Vagina (tissue), 2 donors: ENCODE measurements at regions of chr10 and their contacts with region 1.

Region 1: DNA sequence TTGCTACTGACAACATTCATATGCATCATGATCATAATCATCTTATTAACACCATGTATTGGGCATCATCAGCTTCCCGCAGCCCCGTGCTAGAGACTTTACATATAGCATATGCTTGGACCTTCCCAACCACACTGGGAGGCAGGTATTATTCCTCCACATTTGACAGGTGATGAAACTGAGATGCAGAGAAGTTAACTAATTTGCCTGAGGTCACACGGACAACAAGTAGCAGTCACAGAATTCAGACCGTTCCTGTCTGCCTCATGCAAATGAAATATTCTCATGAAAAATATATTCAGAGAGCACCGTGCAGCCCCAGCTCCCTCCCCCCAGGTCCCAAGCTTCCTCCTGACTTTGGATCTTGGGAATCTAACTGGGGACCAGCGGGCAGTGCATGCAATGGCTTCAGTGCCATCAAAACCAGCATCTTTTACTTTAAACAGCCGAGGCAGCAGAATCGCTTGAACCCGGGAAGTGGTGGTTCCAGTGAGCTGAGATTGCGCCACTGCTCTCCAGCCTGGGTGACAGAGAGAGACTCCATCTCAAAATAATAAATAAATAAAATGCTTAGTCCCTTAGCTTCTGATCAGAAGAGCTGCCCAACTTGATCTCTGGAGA is 112.2 kb upstream of the GPR26 start:
- DNase-seq: peak; percentile 42 to 70
- H3K4me3 ChIP-seq: no peak overlapping the region
- H3K27ac ChIP-seq: no peak overlapping the region
- H3K4me1 ChIP-seq: no peaks in the 10 kb centered on the region
- H3K27me3 ChIP-seq: no peaks in the 10 kb centered on the region
- CTCF ChIP-seq: no peak
- POLR2A ChIP-seq: no peak

Region 2: DNA sequence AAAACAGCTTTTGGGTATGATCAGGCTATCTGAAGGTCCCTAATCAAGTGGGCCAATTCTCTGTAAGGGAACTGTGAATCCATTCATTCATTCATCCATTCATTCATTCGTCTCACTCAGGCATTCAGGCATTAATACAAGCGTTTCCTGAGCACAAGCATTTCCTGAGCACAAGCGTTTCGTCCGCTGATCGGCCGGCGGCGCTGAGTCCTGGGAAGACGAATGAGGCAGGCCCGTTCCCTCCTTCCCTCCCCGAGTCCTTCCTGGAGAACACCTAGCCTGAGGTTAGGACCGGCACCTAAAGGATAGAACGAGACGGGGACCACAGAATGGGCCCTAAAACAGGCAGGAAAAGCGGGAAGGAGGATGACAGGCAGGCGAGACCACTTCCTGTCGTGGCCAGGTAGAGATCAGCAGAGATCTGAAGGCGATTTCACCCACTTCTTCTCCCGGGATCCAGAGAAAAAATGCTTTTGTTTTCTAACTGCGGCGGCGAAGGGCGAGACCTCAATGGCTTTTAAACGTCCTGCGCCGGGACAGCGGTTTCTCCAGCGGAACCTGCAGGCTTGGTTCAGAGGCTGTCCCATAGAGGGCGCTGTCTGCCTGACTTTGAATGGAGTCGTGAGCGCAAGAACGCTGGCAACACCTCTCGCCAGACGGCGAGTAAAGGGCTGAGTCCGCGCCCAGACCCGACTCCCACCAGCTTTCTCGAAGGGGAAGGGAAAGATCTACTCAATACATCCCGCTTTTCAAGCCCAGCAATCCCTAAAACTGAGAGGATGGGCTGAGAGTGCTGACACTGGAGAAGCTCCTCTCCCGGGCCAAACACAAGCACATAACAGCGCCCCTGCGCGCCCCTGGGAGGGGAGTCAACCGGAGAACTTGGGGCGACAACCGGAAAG is 421.1 kb before region 1 on chr10:
- intact Hi-C with region 1: loop called (anchors 2 kb)
- DNase-seq: no peak
- H3K4me3 ChIP-seq: peak overlapping the region in 1 of 2 donors; percentile 26
- H3K27ac ChIP-seq: no peak overlapping the region
- H3K4me1 ChIP-seq: peaks cover 54% of the 10 kb centered on the region
- H3K27me3 ChIP-seq: peaks cover 27% of the 10 kb centered on the region
- CTCF ChIP-seq: peak; percentile 74 to 82 (median 76)
- POLR2A ChIP-seq: no peak

Region 3: GRCh38 chr10:123655751-123656150 is 101.8 kb after region 1 on chr10:
- intact Hi-C with region 1: no loop called
- DNase-seq: no peak
- H3K4me3 ChIP-seq: no peak overlapping the region
- H3K27ac ChIP-seq: no peak overlapping the region
- H3K4me1 ChIP-seq: no peaks in the 10 kb centered on the region
- H3K27me3 ChIP-seq: no peaks in the 10 kb centered on the region
- CTCF ChIP-seq: no peak
- POLR2A ChIP-seq: no peak